ENCODE measurements at regions of chr2 and their contacts with region 1.

Region 1: GRCh38 chr2:234544659-234545611 is 48.1 kb upstream of the ARL4C start:
- DNase-seq: peak; percentile 52 to 72
- ATAC-seq: peak; percentile 49 to 77 (median 69)
- H3K4me3 ChIP-seq: no peak overlapping the region
- H3K27ac ChIP-seq: no peak overlapping the region
- H3K4me1 ChIP-seq: no peaks in the 10 kb centered on the region
- H3K27me3 ChIP-seq: peaks cover 0 to 31% (median 0%) of the 10 kb centered on the region in 3 donors
- CTCF ChIP-seq: peak; percentile 91

Region 2: GRCh38 chr2:233976690-233977294 is 568.1 kb before region 1 on chr2:
- intact Hi-C with region 1: loop called in 1 of 2 experiments (anchors 5 kb)
- DNase-seq: no peak
- ATAC-seq: no peak
- H3K4me3 ChIP-seq: no peak overlapping the region
- H3K27ac ChIP-seq: no peak overlapping the region
- H3K4me1 ChIP-seq: no peaks in the 10 kb centered on the region
- H3K27me3 ChIP-seq: peaks cover 0 to 2% (median 0%) of the 10 kb centered on the region in 3 donors
- CTCF ChIP-seq: no peak

Region 3: DNA sequence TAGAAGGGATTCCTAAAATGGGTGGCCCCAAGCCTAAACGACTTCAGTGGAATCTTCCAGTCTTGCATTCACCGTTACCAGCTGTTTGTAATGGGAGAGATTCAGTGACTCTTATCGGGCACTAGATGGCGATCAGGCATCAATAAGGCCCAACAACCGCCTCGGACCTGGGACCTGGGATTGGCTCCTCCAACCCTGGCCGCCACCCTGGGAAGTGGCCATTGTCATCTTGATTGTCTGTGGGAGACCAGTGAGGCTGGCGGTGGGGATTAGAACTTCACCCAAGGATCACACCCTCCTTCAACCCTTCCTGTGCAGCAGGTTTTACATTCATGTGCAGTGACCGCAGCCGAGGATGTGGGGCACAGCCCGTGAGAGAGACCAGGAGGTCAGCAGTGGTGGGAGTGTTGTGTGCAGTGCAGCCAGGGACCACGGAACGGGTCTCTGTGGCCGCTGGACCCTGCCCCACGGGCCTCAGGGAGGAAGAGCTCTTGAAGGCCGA is 409.2 kb before region 1 on chr2:
- intact Hi-C with region 1: loop called in 1 of 2 experiments (anchors 10 kb)
- DNase-seq: peak in 1 of 2 donors; percentile 33
- ATAC-seq: no peak
- H3K4me3 ChIP-seq: no peak overlapping the region
- H3K27ac ChIP-seq: no peak overlapping the region
- H3K4me1 ChIP-seq: no peaks in the 10 kb centered on the region
- H3K27me3 ChIP-seq: peaks cover 0 to 6% (median 0%) of the 10 kb centered on the region in 3 donors
- CTCF ChIP-seq: peak; percentile 47

Region 4: GRCh38 chr2:234730066-234730640 is 185.2 kb after region 1 on chr2:
- intact Hi-C with region 1: no loop called
- DNase-seq: no peak
- ATAC-seq: no peak
- H3K4me3 ChIP-seq: no peak overlapping the region
- H3K27ac ChIP-seq: no peak overlapping the region
- H3K4me1 ChIP-seq: no peaks in the 10 kb centered on the region
- H3K27me3 ChIP-seq: no peaks in the 10 kb centered on the region
- CTCF ChIP-seq: no peak

Region 5: GRCh38 chr2:234751275-234751973 is 206.5 kb after region 1 on chr2:
- intact Hi-C with region 1: no loop called
- DNase-seq: no peak
- ATAC-seq: no peak
- H3K4me3 ChIP-seq: no peak overlapping the region
- H3K27ac ChIP-seq: no peak overlapping the region
- H3K4me1 ChIP-seq: no peaks in the 10 kb centered on the region
- H3K27me3 ChIP-seq: peaks cover 0 to 3% (median 0%) of the 10 kb centered on the region in 3 donors
- CTCF ChIP-seq: no peak